ENCODE measurements at regions of chr16 and their contacts with region 1.

Region 1: GRCh38 chr16:3023669-3024478 is at the starts of genes HCFC1R1 and THOC6:
- DNase-seq: peak; percentile 98
- ATAC-seq: peak; percentile 52
- H3K4me3 ChIP-seq: peak within 1 kb of the TSS; percentile 94 to 95
- H3K27ac ChIP-seq: peak within 1 kb of the TSS; percentile 100
- H3K4me1 ChIP-seq: peaks cover 22 to 64% of the 10 kb centered on the region in 2 experiments
- H3K27me3 ChIP-seq: no peaks in the 10 kb centered on the region
- CTCF ChIP-seq: no peak
- POLR2A ChIP-seq: peak; percentile 61
- RAD21 ChIP-seq: no peak
- total RNA-seq, gene HCFC1R1: 60.0 TPM
- total RNA-seq, gene THOC6: 62.9 TPM

Region 2: GRCh38 chr16:2155091-2156021 is 868.5 kb before region 1 on chr16 and contains the start of gene TRAF7:
- CTCF ChIA-PET with region 1: no interaction called
- POLR2A ChIA-PET with region 1: interaction called, 4 read pairs
- RAD21 ChIA-PET with region 1: no interaction called
- intact Hi-C with region 1: loop called (anchors 5 kb)
- DNase-seq: peak; percentile 100
- ATAC-seq: peak; percentile 74
- H3K4me3 ChIP-seq: peak within 1 kb of the TSS; percentile 98 to 100
- H3K27ac ChIP-seq: peak within 1 kb of the TSS; percentile 84
- H3K4me1 ChIP-seq: peaks cover 48 to 74% of the 10 kb centered on the region in 2 experiments
- H3K27me3 ChIP-seq: no peaks in the 10 kb centered on the region
- CTCF ChIP-seq: no peak
- POLR2A ChIP-seq: peak; percentile 99
- RAD21 ChIP-seq: no peak
- total RNA-seq, gene TRAF7: 160 TPM

Region 3: DNA sequence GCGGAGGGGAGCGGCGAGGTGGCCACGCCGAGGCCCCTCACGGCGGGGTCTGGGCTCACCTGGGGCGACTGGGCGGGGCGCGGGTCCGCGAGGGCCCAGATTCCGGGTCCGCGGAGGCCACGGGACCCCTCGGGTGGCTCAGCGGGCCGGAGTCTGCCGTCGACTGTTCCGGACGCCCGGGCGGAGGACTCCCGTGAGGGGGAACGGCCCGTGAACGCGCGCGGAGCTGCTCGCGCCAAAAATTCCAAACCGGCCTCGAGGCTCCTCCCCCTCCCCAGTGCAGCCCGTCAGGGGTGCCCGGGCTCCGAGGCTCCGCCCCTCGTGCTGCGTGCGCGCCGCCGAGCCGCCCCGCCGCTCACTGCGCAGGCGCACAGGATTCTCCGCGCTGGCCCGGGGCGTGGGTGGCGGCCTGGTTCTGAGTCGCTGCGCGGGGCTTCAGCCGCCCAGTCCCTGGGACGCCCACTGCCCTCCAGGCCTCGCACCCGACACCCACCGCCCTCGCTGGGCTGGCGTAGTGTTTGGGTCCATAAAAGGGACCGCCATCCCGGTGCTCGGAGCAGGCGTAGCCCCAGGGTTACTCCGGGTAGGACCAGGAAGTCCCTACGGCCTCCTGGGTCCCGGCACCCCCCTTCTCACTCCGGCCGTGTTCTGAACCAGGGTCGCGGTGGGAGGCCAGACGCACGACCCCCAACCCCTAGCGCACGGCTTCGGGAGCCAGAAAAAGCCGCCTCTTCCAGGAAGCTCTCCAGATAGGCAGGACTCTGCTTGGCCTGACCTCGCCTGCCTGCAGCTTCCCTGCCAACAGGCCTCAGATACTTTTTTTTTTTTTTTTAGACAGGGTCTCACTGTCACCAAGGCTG is 43.4 kb before region 1 on chr16 and contains the start of gene PKMYT1:
- CTCF ChIA-PET with region 1: interaction called, 5 read pairs
- POLR2A ChIA-PET with region 1: interaction called, 11 read pairs
- RAD21 ChIA-PET with region 1: no interaction called
- intact Hi-C with region 1: loop called (anchors 5 kb)
- DNase-seq: peak; percentile 56
- ATAC-seq: peak; percentile 80
- H3K4me3 ChIP-seq: peak within 1 kb of the TSS; percentile 89 to 99
- H3K27ac ChIP-seq: peak within 1 kb of the TSS; percentile 93
- H3K4me1 ChIP-seq: peaks cover 24 to 44% of the 10 kb centered on the region in 2 experiments
- H3K27me3 ChIP-seq: no peaks in the 10 kb centered on the region
- CTCF ChIP-seq: no peak
- POLR2A ChIP-seq: peak; percentile 95
- RAD21 ChIP-seq: no peak
- total RNA-seq, gene PKMYT1: 104 TPM

Region 4: GRCh38 chr16:3009565-3010390 is 14.1 kb before region 1 on chr16:
- CTCF ChIA-PET with region 1: interaction called, 29 read pairs
- POLR2A ChIA-PET with region 1: interaction called, 188 read pairs
- RAD21 ChIA-PET with region 1: no interaction called
- intact Hi-C with region 1: loop called (anchors 2 kb)
- DNase-seq: peak; percentile 66
- ATAC-seq: peak; percentile 70
- H3K4me3 ChIP-seq: peak overlapping the region; percentile 16 to 46
- H3K27ac ChIP-seq: peak overlapping the region; percentile 76
- H3K4me1 ChIP-seq: peaks cover 67 to 99% of the 10 kb centered on the region in 2 experiments
- H3K27me3 ChIP-seq: no peaks in the 10 kb centered on the region
- CTCF ChIP-seq: no peak
- POLR2A ChIP-seq: no peak
- RAD21 ChIP-seq: no peak

Region 5: DNA sequence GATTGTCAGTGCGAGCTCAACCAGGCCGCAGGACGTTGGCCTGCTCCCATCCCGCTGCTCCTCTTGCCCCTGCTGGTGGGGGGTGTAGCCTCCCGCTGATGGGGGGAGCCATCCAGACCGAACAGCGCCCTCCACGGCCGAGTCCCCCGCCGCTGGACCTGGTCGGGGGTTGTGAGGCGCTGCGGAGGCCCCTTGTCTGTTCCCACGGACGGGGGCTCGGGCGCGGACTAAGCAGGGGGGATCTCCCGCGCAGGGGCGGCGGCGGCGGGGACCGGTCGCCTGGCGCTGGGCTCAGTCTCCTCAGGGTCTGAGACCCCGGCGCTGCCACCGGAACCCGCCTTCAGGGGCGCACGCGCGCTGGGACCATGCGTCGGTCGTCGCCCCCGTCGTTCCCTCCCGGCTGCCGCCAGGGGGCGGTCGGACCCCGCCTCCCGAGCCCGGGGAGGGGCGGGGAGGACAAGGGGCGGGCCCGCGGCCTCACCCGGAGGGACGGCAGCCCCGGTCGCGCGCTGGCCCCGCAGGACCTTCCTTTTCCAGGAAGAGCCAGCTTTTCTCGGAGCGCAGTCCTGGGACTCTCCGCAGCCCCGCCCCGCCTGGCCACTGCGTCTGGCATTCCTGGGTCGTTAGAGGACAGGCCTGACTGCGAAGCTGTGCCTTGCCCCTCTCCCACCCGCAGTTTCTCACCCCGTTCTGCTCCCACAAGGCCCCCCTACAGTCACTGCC is 35.3 kb after region 1 on chr16:
- CTCF ChIA-PET with region 1: interaction called, 11 read pairs
- POLR2A ChIA-PET with region 1: interaction called, 4 read pairs
- RAD21 ChIA-PET with region 1: no interaction called
- intact Hi-C with region 1: no loop called
- DNase-seq: peak; percentile 60
- ATAC-seq: peak; percentile 86
- H3K4me3 ChIP-seq: peak overlapping the region; percentile 81 to 87
- H3K27ac ChIP-seq: peak overlapping the region; percentile 84
- H3K4me1 ChIP-seq: peaks cover 0 to 22% of the 10 kb centered on the region in 2 experiments; a peak in 3 of 4 replicates
- H3K27me3 ChIP-seq: no peaks in the 10 kb centered on the region
- CTCF ChIP-seq: peak; percentile 58 to 94 (median 66)
- POLR2A ChIP-seq: no peak
- RAD21 ChIP-seq: peak; percentile 89

Measured in HCT116 (cell line).